ENCODE measurements at regions of chr2 and their contacts with region 1.

Region 1: DNA sequence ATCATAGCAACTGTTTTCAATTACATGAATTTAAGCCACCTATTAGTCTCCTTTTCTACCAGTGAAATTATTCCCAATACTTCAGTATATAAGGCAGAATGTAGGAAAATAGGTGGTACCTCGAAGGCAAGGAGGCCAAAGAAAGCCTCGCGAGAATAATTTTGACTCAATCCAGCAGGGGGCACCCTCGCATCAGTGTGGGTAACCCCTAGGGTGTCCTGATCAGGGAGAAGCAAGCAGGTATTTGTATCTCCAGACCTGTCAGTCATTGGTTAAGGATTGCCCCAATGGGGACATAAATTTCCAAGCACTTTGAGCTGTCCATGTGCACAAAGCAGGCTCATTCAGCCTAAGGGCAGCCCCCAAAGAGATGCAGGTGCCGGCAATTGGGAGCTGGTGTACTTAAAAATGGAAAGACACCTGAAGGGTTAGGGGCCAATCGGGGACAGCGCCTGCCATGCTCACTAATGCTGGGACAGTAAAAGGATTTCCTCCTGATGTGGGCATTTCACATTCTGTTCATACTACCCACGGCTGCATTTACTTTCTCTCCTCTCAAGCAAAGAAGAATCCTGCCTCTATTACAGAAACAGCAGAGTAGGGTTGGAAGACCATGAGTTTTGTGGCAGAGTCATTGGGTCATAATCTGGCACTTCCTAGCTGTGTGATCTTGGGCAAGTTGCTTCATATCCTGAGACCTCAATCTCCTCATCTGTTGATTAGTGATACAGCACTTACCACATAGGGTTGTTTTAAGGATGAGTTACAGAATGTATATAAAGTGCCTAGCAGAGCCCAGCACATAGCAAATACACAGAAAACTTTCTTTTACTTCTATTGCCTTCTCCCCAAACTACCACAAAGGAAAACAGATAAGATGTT is 136.1 kb downstream of the ICOS start:
- DNase-seq: peak; percentile 44
- H3K4me3 Mint-ChIP-seq: no peak overlapping the region
- H3K27ac Mint-ChIP-seq: no peak overlapping the region
- H3K4me1 Mint-ChIP-seq: peaks cover 13% of the 10 kb centered on the region
- H3K27me3 Mint-ChIP-seq: no peaks in the 10 kb centered on the region

Region 2: GRCh38 chr2:203683932-203684556 is 388.6 kb before region 1 on chr2:
- intact Hi-C with region 1: no loop called
- DNase-seq: peak; percentile 19
- H3K4me3 Mint-ChIP-seq: no peak overlapping the region
- H3K27ac Mint-ChIP-seq: no peak overlapping the region
- H3K4me1 Mint-ChIP-seq: peaks cover 49% of the 10 kb centered on the region
- H3K27me3 Mint-ChIP-seq: no peaks in the 10 kb centered on the region

Region 3: GRCh38 chr2:203972066-203972465 is 100.6 kb before region 1 on chr2:
- intact Hi-C with region 1: no loop called
- DNase-seq: no peak
- H3K4me3 Mint-ChIP-seq: no peak overlapping the region
- H3K27ac Mint-ChIP-seq: no peak overlapping the region
- H3K4me1 Mint-ChIP-seq: peaks cover 14% of the 10 kb centered on the region
- H3K27me3 Mint-ChIP-seq: no peaks in the 10 kb centered on the region

Region 4: DNA sequence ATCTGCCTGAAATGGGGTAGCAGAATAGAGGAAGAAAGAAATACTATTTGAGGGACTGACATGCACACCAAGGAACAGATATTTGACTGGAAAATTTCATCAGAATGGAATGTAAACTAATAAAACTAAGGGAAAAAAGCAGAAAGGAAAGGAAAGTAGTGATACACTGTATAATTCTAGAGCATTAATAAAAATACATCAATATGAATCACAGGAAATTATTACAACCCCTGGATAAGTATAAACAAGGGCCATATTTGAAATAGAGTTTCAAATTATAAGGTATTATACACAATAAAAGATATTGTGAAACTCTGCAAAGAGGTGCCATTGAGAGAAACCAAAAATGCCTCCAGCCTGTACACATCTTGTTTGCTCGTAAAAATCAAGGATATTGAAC is 13.5 kb after region 1 on chr2:
- intact Hi-C with region 1: no loop called
- DNase-seq: no peak
- H3K4me3 Mint-ChIP-seq: no peak overlapping the region
- H3K27ac Mint-ChIP-seq: no peak overlapping the region
- H3K4me1 Mint-ChIP-seq: peaks cover 4% of the 10 kb centered on the region
- H3K27me3 Mint-ChIP-seq: peaks cover 2% of the 10 kb centered on the region

Region 5: GRCh38 chr2:204177977-204178540 is 105.4 kb after region 1 on chr2:
- intact Hi-C with region 1: loop called (anchors 1 kb)
- DNase-seq: peak; percentile 51
- H3K4me3 Mint-ChIP-seq: no peak overlapping the region
- H3K27ac Mint-ChIP-seq: no peak overlapping the region
- H3K4me1 Mint-ChIP-seq: no peaks in the 10 kb centered on the region
- H3K27me3 Mint-ChIP-seq: peaks cover 17% of the 10 kb centered on the region

Region 6: DNA sequence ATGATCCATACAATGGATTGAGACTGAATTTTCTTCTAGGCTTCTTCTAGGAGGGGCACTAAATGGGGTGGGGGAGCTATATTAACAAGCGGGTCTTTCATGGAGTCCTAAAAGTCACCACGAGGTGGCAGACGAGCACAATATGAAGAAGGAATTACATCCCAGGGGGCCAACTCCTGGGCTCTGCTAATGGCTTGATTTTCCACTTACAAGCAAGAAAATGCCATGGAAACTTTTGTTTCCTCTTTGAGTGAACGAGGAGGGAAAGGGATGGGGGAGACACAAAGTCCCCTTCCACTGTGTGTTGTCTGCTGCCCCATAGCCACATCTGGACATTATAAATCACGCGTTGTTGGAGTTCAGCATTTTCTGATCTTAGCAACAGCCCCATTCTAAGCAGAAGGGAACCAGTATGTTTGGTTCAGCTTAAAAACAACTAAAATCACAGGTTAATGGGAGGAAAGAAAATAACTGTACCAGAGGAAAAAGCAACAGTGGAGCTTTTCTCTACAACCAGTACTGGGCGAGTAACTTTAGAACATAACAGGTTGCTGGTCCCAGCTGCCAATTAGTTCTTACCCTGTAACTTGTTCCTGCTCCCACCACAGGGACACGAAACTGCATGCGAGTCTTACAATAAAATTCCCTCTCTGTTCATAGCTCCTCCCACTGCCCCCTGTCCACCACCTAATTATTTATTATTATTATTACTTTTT is 187.6 kb after region 1 on chr2:
- intact Hi-C with region 1: loop called (anchors 2 kb)
- DNase-seq: no peak
- H3K4me3 Mint-ChIP-seq: no peak overlapping the region
- H3K27ac Mint-ChIP-seq: no peak overlapping the region
- H3K4me1 Mint-ChIP-seq: no peaks in the 10 kb centered on the region
- H3K27me3 Mint-ChIP-seq: peaks cover 38% of the 10 kb centered on the region

Region 7: GRCh38 chr2:204691911-204692510 is 619.3 kb after region 1 on chr2:
- intact Hi-C with region 1: loop called (anchors 2 kb)
- DNase-seq: no peak
- H3K4me3 Mint-ChIP-seq: no peak overlapping the region
- H3K27ac Mint-ChIP-seq: no peak overlapping the region
- H3K4me1 Mint-ChIP-seq: peaks cover 11% of the 10 kb centered on the region
- H3K27me3 Mint-ChIP-seq: peaks cover 3% of the 10 kb centered on the region

Measured in activated T-helper 1 cell treated with anti-CD3 and anti-CD28 coated beads, Interleukin-12 subunit alpha, Interleukin-12 subunit beta, Interleukin-2, Interleukin-4 antibody, amounts not matched to agents 30 ng/mL and 10 ng/mL and 1 ng/mL, durations not matched to agents 14 hours and 24 hours and 36 hours (primary cell).